ENCODE measurements at regions of chr2 and their contacts with region 1.

Region 1: GRCh38 chr2:222912117-222912516 is 51.3 kb downstream of the ACSL3 start:
- DNase-seq: peak; percentile 80
- ATAC-seq: peak; percentile 99
- H3K4me3 ChIP-seq: peak overlapping the region in 3 of 5 experiments; percentile 2 to 37 (median 36)
- H3K4me3 Mint-ChIP-seq: peak overlapping the region; percentile 73
- H3K27ac ChIP-seq: peak overlapping the region; percentile 74 to 86
- H3K27ac Mint-ChIP-seq: peak overlapping the region; percentile 90
- H3K4me1 ChIP-seq: peaks cover 31% of the 10 kb centered on the region in 2 donors
- H3K4me1 Mint-ChIP-seq: peaks cover 45% of the 10 kb centered on the region
- H3K27me3 ChIP-seq: no peaks in the 10 kb centered on the region
- H3K27me3 Mint-ChIP-seq: no peaks in the 10 kb centered on the region
- CTCF ChIP-seq: no peak

Region 2: DNA sequence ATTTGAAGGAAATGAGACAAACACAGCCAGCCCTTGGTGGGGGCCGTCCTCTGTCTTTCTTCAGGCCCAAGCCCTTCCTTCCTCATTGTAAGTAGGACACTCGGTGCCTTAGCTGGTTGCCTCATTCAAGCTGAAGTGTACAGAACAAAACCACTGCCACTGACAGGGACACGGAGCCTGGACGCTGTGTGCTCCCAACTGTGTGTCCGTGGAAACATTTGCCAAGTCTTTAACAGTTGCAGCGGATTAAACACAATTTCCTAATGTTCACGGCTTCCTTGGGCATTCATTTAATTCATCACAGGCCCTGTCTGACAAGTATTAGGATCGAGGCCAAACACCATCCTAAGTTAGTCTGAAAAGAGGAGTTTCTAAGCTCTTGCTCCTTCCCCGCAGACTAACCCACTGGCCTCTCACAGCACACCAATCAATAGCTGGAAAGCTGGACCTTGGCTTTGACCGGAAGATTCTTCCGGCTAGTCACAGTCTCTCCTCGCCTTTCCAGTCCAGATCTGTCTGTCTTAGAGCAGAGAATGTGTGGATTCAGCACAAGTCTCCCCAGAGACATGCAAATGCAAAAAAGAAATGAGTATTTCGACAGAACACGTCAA is 120.0 kb before region 1 on chr2:
- CTCF ChIA-PET with region 1: no interaction called
- POLR2A ChIA-PET with region 1: no interaction called
- intact Hi-C with region 1: loop called (anchors 5 kb)
- DNase-seq: no peak
- ATAC-seq: no peak
- H3K4me3 ChIP-seq: no peak overlapping the region
- H3K4me3 Mint-ChIP-seq: no peak overlapping the region
- H3K27ac ChIP-seq: no peak overlapping the region
- H3K27ac Mint-ChIP-seq: no peak overlapping the region
- H3K4me1 ChIP-seq: peaks cover 12 to 16% of the 10 kb centered on the region in 2 donors
- H3K4me1 Mint-ChIP-seq: peaks cover 12% of the 10 kb centered on the region
- H3K27me3 ChIP-seq: no peaks in the 10 kb centered on the region
- H3K27me3 Mint-ChIP-seq: no peaks in the 10 kb centered on the region
- CTCF ChIP-seq: no peak

Region 3: DNA sequence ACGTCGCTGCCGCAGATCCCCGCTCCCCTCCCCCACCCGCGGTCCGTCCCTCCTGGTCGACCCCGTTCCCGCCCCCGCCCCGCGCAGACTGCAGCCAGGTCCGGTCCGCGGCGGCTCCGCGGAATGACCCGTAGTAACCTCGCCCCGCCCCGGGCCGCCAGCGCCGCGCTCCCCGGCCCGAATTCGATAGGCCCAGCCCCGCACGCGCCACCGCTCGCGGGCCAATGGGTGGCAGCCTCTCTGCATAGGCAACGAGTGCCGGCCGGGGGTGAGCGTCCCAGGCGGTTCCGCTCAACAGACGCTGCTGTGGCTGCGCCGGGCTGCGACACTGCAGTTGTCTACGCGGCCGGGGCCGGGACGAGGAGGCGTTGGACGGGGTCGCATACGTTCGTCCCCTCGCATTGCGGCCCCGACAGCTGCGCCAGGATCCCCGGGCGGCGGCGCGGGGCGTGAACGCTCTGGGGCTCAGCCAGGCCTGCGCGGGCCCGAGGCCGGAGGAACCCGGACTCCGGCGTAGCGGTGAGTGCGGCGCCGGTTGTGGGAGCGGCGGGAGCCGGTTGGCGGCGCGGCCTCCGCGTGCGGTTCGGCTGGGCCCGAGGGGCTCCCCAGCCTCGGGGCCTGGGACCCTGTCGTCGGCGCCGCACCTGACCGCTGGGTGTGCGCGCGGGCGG is 51.2 kb before region 1 on chr2 and contains the start of gene ACSL3:
- CTCF ChIA-PET with region 1: interaction called, 10 read pairs
- POLR2A ChIA-PET with region 1: no interaction called
- intact Hi-C with region 1: loop called (anchors 1 kb)
- DNase-seq: peak; percentile 93
- ATAC-seq: peak; percentile 97
- H3K4me3 ChIP-seq: peak within 1 kb of the TSS; percentile 61 to 93 (median 69)
- H3K4me3 Mint-ChIP-seq: peak within 1 kb of the TSS; percentile 82
- H3K27ac ChIP-seq: peak within 1 kb of the TSS; percentile 56 to 89
- H3K27ac Mint-ChIP-seq: peak within 1 kb of the TSS; percentile 88
- H3K4me1 ChIP-seq: peaks cover 20 to 23% of the 10 kb centered on the region in 2 donors
- H3K4me1 Mint-ChIP-seq: peaks cover 14% of the 10 kb centered on the region
- H3K27me3 ChIP-seq: no peaks in the 10 kb centered on the region
- H3K27me3 Mint-ChIP-seq: no peaks in the 10 kb centered on the region
- CTCF ChIP-seq: peak; percentile 8
- total RNA-seq, gene ACSL3: 35.9 and 46.0 TPM in 2 replicates

Region 4: DNA sequence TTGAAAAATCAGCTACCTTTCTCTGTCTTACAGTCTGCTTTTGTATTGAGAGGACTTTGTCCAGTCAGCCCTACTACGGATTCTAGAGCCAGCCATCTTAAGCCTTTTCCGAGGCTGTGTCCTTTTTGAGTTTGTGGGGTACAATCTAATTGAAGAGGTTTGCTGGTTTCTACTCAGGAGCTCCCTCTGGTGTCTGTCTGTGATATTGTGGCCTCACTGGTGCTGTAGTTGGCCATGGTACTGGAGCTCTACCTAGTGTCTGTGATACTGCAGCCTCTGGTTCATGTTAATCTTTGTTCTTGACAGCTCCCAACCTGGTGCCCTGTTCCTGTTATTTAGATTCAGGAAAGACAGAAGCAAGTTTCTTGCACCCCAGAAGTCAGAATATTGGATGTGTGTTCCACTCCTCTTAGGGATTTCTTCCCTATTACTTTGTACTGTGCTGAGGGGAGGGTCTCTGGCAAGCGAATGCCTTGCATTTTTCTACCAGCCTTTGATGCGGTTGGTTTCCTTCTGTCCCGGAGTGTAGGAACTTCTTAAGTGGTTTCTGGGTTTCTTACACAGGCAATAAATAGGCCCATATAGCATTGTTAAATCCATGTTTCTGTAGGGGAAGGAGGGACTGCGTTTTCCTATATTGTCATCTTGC is 27.2 kb after region 1 on chr2:
- CTCF ChIA-PET with region 1: interaction called, 20 read pairs
- POLR2A ChIA-PET with region 1: no interaction called
- intact Hi-C with region 1: loop called (anchors 2 kb)
- DNase-seq: peak; percentile 66
- ATAC-seq: peak; percentile 64
- H3K4me3 ChIP-seq: no peak overlapping the region
- H3K4me3 Mint-ChIP-seq: no peak overlapping the region
- H3K27ac ChIP-seq: no peak overlapping the region
- H3K27ac Mint-ChIP-seq: no peak overlapping the region
- H3K4me1 ChIP-seq: no peaks in the 10 kb centered on the region
- H3K4me1 Mint-ChIP-seq: no peaks in the 10 kb centered on the region
- H3K27me3 ChIP-seq: no peaks in the 10 kb centered on the region
- H3K27me3 Mint-ChIP-seq: no peaks in the 10 kb centered on the region
- CTCF ChIP-seq: peak; percentile 77

Region 5: GRCh38 chr2:223328578-223328977 is 416.5 kb after region 1 on chr2:
- CTCF ChIA-PET with region 1: no interaction called
- POLR2A ChIA-PET with region 1: no interaction called
- intact Hi-C with region 1: no loop called
- DNase-seq: no peak
- ATAC-seq: no peak
- H3K4me3 ChIP-seq: no peak overlapping the region
- H3K4me3 Mint-ChIP-seq: no peak overlapping the region
- H3K27ac ChIP-seq: no peak overlapping the region
- H3K27ac Mint-ChIP-seq: no peak overlapping the region
- H3K4me1 ChIP-seq: no peaks in the 10 kb centered on the region
- H3K4me1 Mint-ChIP-seq: no peaks in the 10 kb centered on the region
- H3K27me3 ChIP-seq: no peaks in the 10 kb centered on the region
- H3K27me3 Mint-ChIP-seq: peaks cover 6% of the 10 kb centered on the region
- CTCF ChIP-seq: no peak